ENCODE measurements at regions of chr14 and their contacts with region 1.

Region 1: GRCh38 chr14:105086833-105087307 is 21.6 kb upstream of the GPR132 start:
- DNase-seq: peak; percentile 74 to 85
- ATAC-seq: peak; percentile 24 to 66 (median 52)
- H3K4me3 ChIP-seq: peak overlapping the region in 9 of 10 donors; percentile 42 to 62 (median 54)
- H3K27ac ChIP-seq: peak overlapping the region in 7 of 10 donors; percentile 15 to 73 (median 35)
- H3K4me1 ChIP-seq: peaks cover 11 to 48% (median 39%) of the 10 kb centered on the region in 9 donors
- H3K27me3 ChIP-seq: peaks cover 0 to 25% (median 8%) of the 10 kb centered on the region in 7 donors
- CTCF ChIP-seq: peak; percentile 65 to 93 (median 88)

Region 2: GRCh38 chr14:104976198-104977007 is 110.5 kb before region 1 on chr14:
- intact Hi-C with region 1: loop called in 2 of 10 experiments (anchors 2 to 5 kb)
- DNase-seq: peak; percentile 80 to 87
- ATAC-seq: peak; percentile 56 to 73 (median 69)
- H3K4me3 ChIP-seq: no peak overlapping the region
- H3K27ac ChIP-seq: no peak overlapping the region
- H3K4me1 ChIP-seq: peaks cover 12 to 80% (median 59%) of the 10 kb centered on the region in 9 donors
- H3K27me3 ChIP-seq: peaks cover 0 to 38% (median 13%) of the 10 kb centered on the region in 7 donors
- CTCF ChIP-seq: peak; percentile 80 to 96 (median 92)

Region 3: GRCh38 chr14:105153271-105153731 is 66.4 kb after region 1 on chr14:
- intact Hi-C with region 1: loop called in 2 of 10 experiments (anchors 5 kb)
- DNase-seq: peak; percentile 68 to 77
- ATAC-seq: peak; percentile 63 to 91 (median 82)
- H3K4me3 ChIP-seq: no peak overlapping the region
- H3K27ac ChIP-seq: peak overlapping the region; percentile 8 to 89 (median 80)
- H3K4me1 ChIP-seq: peaks cover 9 to 41% (median 30%) of the 10 kb centered on the region in 9 donors
- H3K27me3 ChIP-seq: no peaks in the 10 kb centered on the region
- CTCF ChIP-seq: no peak

Region 4: GRCh38 chr14:105168979-105169507 is 82.2 kb after region 1 on chr14:
- intact Hi-C with region 1: loop called in 7 of 10 experiments (anchors 5 to 10 kb)
- DNase-seq: peak; percentile 46 to 56
- ATAC-seq: peak; percentile 23 to 57 (median 44)
- H3K4me3 ChIP-seq: peak overlapping the region in 9 of 10 donors; percentile 32 to 56 (median 44)
- H3K27ac ChIP-seq: peak overlapping the region in 8 of 10 donors; percentile 52 to 82 (median 78)
- H3K4me1 ChIP-seq: peaks cover 18 to 59% (median 49%) of the 10 kb centered on the region in 9 donors
- H3K27me3 ChIP-seq: peaks cover 0 to 47% (median 9%) of the 10 kb centered on the region in 7 donors
- CTCF ChIP-seq: peak; percentile 25 to 70 (median 56)

Region 5: GRCh38 chr14:105197271-105197670 is 110.4 kb after region 1 on chr14:
- intact Hi-C with region 1: loop called in 4 of 10 experiments (anchors 5 to 10 kb)
- DNase-seq: peak; percentile 71 to 82
- ATAC-seq: peak; percentile 25 to 61 (median 43)
- H3K4me3 ChIP-seq: peak overlapping the region in 5 of 10 donors; percentile 6 to 38 (median 30)
- H3K27ac ChIP-seq: peak overlapping the region; percentile 80 to 96 (median 88)
- H3K4me1 ChIP-seq: peaks cover 28 to 97% (median 83%) of the 10 kb centered on the region in 9 donors
- H3K27me3 ChIP-seq: peaks cover 8 to 93% (median 46%) of the 10 kb centered on the region in 7 donors
- CTCF ChIP-seq: no peak

Region 6: GRCh38 chr14:105281371-105282097 is 194.7 kb after region 1 on chr14:
- intact Hi-C with region 1: loop called in 5 of 10 experiments (anchors 2 to 10 kb)
- DNase-seq: no peak
- ATAC-seq: peak in 2 of 8 donors; percentile 13 to 36
- H3K4me3 ChIP-seq: no peak overlapping the region
- H3K27ac ChIP-seq: no peak overlapping the region
- H3K4me1 ChIP-seq: peaks cover 0 to 19% (median 14%) of the 10 kb centered on the region in 9 donors
- H3K27me3 ChIP-seq: no peaks in the 10 kb centered on the region
- CTCF ChIP-seq: peak; percentile 13 to 74 (median 59)